ENCODE measurements at regions of chr19 and their contacts with region 1.

Region 1: DNA sequence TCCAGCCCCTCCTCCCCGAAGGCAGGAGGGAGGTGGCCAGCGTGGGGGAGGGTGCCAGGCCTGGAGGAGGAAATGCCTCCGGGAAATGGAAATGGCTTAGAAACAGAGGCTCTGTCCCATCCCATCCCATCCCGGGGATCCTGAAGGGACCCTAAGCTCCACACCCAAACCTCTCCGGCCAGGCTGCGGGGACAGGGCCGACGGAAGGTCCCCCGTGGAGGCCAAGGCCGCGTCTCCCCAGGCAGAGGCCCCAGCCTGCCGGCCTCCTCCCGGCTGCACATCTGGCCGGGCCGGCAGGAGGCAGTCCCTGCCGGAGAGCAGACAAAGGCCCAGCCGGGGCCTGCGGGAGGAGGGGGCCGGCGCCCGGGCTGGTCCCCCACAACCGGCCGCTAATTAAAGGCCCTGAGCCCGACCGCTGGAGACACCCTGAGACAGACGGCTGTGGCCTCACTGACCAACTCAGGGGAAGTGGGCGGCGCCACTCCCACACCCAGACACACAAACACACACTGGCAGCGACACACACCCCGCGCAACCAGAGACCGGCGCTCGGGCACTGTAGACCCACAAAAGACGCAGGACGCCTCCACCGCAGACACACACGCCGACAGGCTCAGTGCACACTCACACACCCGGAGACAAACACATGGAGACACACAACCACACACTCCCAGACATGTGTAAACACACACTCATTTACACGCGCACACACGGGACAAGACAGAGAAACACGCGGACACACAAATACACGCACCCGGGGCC is 1.1 kb downstream of the ADAMTS10 start:
- DNase-seq: peak; percentile 84
- H3K4me3 ChIP-seq: peak overlapping the region; percentile 56 to 80 (median 64)
- H3K27ac ChIP-seq: peak overlapping the region; percentile 79 to 82 (median 80)
- H3K4me1 ChIP-seq: peaks cover 0 to 33% (median 24%) of the 10 kb centered on the region in 4 donors
- H3K27me3 ChIP-seq: no peaks in the 10 kb centered on the region
- CTCF ChIP-seq: peak in 2 of 4 experiments; percentile 24 to 38
- EP300 ChIP-seq: no peak
- POLR2A ChIP-seq: no peak

Region 2: GRCh38 chr19:8580710-8581281 is 28.7 kb before region 1 on chr19:
- intact Hi-C with region 1: no loop called
- DNase-seq: peak; percentile 88
- H3K4me3 ChIP-seq: no peak overlapping the region
- H3K27ac ChIP-seq: no peak overlapping the region
- H3K4me1 ChIP-seq: peaks cover 0 to 9% (median 3%) of the 10 kb centered on the region in 4 donors
- H3K27me3 ChIP-seq: peaks cover 4 to 18% (median 17%) of the 10 kb centered on the region in 3 donors
- CTCF ChIP-seq: peak; percentile 95 to 98 (median 96)
- EP300 ChIP-seq: no peak
- POLR2A ChIP-seq: no peak

Region 3: DNA sequence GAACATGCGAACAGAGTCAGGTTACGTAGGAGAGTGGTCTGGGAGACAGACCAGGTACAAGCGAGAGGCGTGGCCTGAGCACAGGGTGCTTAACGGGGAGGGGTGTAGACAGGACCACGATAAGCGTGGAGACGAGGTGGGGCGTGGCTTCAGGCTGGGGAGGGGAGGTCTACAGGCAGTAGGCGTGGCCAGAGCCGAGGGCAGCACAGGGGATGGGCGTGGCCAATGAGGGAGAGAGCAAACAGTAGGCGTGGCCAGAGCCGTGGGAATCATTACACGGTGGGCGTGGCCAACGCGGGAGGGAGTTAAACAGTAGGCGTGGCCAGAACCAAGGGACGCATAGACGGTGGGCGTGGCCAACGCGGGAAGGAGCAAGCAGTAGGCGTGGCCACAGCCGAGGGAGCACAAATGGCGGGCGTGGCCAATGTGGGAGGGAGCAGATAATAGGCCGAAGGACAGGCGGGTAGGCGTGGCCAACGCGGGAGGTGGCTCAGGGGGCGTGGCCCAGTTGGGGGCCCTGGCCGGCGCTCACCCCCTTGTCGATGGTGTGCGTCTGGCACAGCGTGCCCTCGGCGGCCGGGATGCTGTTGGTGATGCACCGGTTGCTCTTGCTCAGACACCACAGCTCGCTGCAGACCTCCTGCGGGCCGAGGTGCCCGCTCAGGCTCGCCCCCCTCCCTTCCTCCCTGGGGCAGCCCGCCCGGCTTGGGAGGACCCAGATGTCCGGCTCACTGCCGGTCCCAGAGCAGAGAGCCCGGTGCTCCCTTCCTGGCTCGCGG is 17.0 kb before region 1 on chr19:
- intact Hi-C with region 1: loop called (anchors 2 kb)
- DNase-seq: peak; percentile 99
- H3K4me3 ChIP-seq: peak overlapping the region; percentile 26 to 47 (median 43)
- H3K27ac ChIP-seq: peak overlapping the region; percentile 19 to 52 (median 40)
- H3K4me1 ChIP-seq: peaks cover 0 to 28% (median 23%) of the 10 kb centered on the region in 4 donors
- H3K27me3 ChIP-seq: no peaks in the 10 kb centered on the region
- CTCF ChIP-seq: no peak
- EP300 ChIP-seq: no peak
- POLR2A ChIP-seq: no peak

Measured in sigmoid colon (tissue), 7 donors.